Kidney (tissue), 22 donors: ENCODE measurements at regions of chr5 and their contacts with region 1.

Region 1: DNA sequence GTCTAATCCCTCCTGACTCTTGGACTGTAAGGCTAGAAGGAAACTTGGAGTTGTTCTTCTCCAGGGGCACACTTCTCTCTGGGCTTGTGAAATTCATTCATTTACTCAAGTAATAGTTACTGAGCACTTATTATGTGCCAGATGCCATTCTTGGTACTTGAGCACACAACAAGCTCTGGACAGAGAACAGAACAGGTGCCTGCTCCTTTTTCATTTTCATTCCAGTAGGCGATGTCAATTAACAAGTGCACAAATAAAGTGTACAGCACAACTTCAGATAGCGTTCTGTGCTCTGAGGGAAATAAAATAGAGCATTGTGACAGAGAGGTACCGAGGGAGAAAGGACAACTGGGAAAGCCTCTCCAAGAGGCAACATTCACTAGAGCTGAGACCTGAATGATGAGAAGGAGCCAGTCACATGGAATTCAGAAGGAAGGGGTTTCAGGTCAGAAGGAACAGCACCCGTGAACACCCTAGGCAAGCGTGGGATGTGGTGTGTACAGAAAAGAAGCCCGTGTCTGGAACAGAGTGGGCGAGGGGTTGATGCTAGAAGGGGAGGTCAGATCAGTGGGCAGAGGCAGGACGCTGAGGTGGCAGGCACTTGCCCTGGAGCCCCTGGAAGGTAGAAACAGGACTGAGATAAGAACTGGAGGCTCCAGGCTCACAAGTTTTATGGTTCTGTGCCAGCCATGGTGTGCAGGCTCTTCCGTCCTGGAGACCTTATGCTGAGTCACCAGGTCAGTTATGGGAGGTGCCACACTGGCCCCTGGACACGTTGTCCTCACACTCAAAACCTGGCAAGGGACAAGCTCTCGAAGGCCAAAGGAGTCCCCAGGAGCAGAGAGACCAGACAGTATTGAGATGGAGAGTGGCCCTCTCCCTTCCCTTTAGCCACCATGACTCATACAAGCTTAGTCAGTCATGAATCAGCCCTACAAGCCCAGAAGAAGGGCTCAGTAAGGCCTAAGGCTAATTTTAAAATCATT is 7.2 kb upstream of the ABLIM3 start:
- DNase-seq: no peak
- H3K4me3 ChIP-seq: no peak overlapping the region
- H3K27ac ChIP-seq: no peak overlapping the region
- H3K4me1 ChIP-seq: no peaks in the 10 kb centered on the region
- H3K27me3 ChIP-seq: no peaks in the 10 kb centered on the region
- CTCF ChIP-seq: no peak

Region 2: GRCh38 chr5:149238583-149238982 is 104.5 kb after region 1 on chr5:
- intact Hi-C with region 1: loop called (anchors 10 kb)
- DNase-seq: no peak
- H3K4me3 ChIP-seq: no peak overlapping the region
- H3K27ac ChIP-seq: no peak overlapping the region
- H3K4me1 ChIP-seq: no peaks in the 10 kb centered on the region
- H3K27me3 ChIP-seq: no peaks in the 10 kb centered on the region
- CTCF ChIP-seq: no peak